Activated T-helper 1 cell treated with anti-CD3 and anti-CD28 coated beads, Interleukin-12 subunit alpha, Interleukin-12 subunit beta, Interleukin-2, Interleukin-4 antibody, amounts not matched to agents 30 ng/mL and 10 ng/mL and 1 ng/mL, durations not matched to agents 14 hours and 24 hours and 36 hours (primary cell): ENCODE measurements at regions of chr10 and their contacts with region 1.

Region 1: GRCh38 chr10:132536971-132537712 is 445 bp upstream of the INPP5A start:
- DNase-seq: peak; percentile 100
- H3K4me3 Mint-ChIP-seq: peak overlapping the region; percentile 70
- H3K27ac Mint-ChIP-seq: no peak overlapping the region
- H3K4me1 Mint-ChIP-seq: peaks cover 42% of the 10 kb centered on the region
- H3K27me3 Mint-ChIP-seq: peaks cover 7% of the 10 kb centered on the region

Region 2: DNA sequence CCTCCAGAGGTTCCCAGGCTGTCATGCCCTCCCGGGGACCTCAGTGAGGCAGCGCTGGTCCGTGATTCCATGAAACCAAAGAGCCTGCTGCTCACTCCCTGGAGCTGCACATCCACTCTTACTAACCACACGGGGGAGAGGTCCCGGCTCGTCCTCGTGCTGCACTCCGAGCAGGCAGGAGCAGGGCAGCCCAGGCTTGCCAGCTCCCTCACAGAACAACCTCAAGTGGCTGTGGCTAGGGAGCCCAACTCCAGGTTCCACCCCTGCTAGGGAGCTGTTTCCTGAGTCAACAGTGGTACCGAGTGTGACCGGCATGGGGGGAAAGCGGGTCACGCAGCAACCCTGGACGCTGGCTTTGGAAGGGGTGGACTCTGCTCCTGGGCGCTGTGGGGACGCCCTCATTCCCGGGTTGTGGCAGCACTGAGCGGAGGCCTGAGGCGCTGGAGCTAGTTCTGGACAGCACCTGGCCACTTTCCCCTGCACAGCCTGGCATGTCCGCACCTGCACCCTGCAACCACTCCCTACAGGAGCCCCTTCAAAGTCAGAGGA is 664.2 kb before region 1 on chr10:
- intact Hi-C with region 1: no loop called
- DNase-seq: no peak
- H3K4me3 Mint-ChIP-seq: no peak overlapping the region
- H3K27ac Mint-ChIP-seq: no peak overlapping the region
- H3K4me1 Mint-ChIP-seq: no peaks in the 10 kb centered on the region
- H3K27me3 Mint-ChIP-seq: peaks cover 9% of the 10 kb centered on the region

Region 3: GRCh38 chr10:132185601-132186487 is 351.3 kb before region 1 on chr10:
- intact Hi-C with region 1: loop called (anchors 1 kb)
- DNase-seq: peak; percentile 68
- H3K4me3 Mint-ChIP-seq: peak overlapping the region; percentile 71
- H3K27ac Mint-ChIP-seq: no peak overlapping the region
- H3K4me1 Mint-ChIP-seq: no peaks in the 10 kb centered on the region
- H3K27me3 Mint-ChIP-seq: peaks cover 31% of the 10 kb centered on the region

Region 4: DNA sequence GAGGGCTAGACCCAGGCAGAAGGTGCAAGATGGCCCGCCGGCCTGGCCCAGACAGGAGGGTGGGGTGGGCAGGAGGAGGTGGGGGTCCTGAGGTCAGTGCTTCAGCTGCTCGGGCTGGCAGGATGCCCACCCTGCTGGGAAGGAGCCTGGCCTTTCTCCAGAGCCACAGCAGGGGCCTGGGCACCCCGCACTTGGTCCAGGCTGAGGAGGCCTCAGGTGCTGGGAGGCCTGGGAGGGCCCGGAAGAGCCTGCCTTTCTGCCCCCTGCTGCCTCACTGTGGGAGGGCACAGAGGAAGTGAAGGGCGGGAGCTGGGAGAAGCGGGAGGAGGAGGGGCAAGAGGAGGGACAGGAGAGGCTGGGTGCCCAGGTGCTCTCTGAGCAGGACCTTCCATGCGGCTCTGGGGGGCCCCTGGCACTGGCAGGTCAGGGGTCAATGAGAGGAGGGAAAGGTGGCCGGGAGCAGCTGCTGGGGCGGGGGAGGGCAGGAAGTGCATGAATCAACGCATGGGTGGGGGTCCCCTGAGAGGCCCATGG is 90.4 kb before region 1 on chr10:
- intact Hi-C with region 1: loop called (anchors 1 kb)
- DNase-seq: peak; percentile 63
- H3K4me3 Mint-ChIP-seq: peak overlapping the region; percentile 70
- H3K27ac Mint-ChIP-seq: peak overlapping the region; percentile 98
- H3K4me1 Mint-ChIP-seq: peaks cover 30% of the 10 kb centered on the region
- H3K27me3 Mint-ChIP-seq: peaks cover 1% of the 10 kb centered on the region

Region 5: DNA sequence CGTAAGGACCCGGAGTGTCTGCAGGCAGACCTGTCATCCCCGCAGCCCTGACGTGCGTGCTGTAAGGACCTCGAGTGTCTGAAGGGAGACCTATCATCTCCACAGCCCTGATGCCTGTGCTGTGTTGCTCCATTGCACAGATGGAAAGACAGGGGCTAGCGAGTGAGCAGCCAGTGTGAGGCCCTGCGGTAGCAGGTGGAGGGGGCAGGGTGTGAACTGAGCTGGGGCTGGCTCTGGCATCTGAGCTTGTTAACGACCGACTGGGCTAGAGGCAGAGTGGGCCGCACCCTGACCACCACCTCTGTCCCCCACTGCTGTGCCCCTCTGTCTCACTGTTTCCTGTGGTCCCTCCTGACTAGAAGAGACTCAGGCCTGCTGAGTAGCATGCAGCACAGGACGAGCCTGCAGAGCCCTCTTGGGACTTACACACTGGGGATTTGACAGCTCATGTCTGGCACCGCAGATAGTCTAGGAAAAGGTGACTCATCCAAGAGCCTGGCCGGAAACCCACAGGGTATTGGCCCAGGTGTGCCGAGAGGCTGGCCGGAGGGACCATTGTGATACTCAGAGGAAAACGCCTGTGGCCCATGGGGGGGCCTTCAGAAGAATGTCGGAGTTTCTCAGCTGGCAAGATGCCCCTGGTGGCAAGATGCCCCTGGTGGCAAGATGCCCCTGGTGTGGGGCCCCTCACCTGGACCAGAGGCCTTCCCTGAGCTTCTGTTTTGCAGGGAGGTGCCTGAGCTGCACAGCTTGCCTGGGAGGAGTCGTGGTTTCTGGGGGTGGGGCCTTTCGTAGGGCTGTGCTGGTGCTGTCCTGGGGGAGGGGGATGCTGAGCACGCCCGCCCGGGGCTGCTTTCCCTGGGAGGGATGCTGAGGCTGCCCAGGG is 34.8 kb after region 1 on chr10:
- intact Hi-C with region 1: loop called (anchors 1 kb)
- DNase-seq: peak; percentile 73
- H3K4me3 Mint-ChIP-seq: no peak overlapping the region
- H3K27ac Mint-ChIP-seq: peak overlapping the region; percentile 86
- H3K4me1 Mint-ChIP-seq: peaks cover 25% of the 10 kb centered on the region
- H3K27me3 Mint-ChIP-seq: peaks cover 7% of the 10 kb centered on the region

Region 6: GRCh38 chr10:132606536-132607316 is 69.6 kb after region 1 on chr10:
- intact Hi-C with region 1: no loop called
- DNase-seq: no peak
- H3K4me3 Mint-ChIP-seq: no peak overlapping the region
- H3K27ac Mint-ChIP-seq: no peak overlapping the region
- H3K4me1 Mint-ChIP-seq: peaks cover 6% of the 10 kb centered on the region
- H3K27me3 Mint-ChIP-seq: peaks cover 2% of the 10 kb centered on the region

Region 7: DNA sequence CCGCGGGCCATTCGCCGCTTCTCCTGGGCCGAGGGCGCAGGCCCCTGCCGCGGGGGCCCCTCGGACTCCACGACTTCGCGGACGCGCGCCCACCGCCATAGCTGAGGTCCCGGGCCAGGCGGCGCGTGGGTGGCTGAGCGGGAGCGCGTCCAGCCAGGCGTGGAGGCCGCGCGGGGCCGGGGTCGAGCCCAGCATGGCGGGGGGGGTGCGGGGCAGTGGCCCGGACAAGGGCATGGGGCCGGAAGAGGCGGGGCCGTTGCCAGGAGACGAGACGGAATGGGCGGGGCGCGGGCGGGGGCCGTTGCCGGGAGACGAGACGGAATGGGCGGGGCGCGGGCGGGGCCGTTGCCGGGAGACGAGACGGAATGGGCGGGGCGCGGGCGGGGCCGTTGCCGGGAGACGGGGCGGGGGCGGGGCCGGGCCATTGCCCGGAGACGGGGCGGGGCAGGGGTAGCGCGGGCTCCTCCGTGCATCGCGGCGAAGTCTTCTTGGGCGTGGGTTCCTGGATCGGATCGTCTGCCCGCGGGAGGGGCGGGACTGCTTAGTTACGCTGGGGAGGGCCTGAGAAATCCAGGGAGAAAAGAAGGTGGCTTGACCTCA is 724.7 kb after region 1 on chr10:
- intact Hi-C with region 1: loop called (anchors 1 kb)
- DNase-seq: peak; percentile 76
- H3K4me3 Mint-ChIP-seq: peak overlapping the region; percentile 65
- H3K27ac Mint-ChIP-seq: peak overlapping the region; percentile 48
- H3K4me1 Mint-ChIP-seq: peaks cover 56% of the 10 kb centered on the region
- H3K27me3 Mint-ChIP-seq: peaks cover 5% of the 10 kb centered on the region